Activated CD4-positive, alpha-beta T cell treated with anti-CD3 and anti-CD28 coated beads for 36 hours (primary cell): ENCODE measurements at regions of chr12 and their contacts with region 1.

Region 1: DNA sequence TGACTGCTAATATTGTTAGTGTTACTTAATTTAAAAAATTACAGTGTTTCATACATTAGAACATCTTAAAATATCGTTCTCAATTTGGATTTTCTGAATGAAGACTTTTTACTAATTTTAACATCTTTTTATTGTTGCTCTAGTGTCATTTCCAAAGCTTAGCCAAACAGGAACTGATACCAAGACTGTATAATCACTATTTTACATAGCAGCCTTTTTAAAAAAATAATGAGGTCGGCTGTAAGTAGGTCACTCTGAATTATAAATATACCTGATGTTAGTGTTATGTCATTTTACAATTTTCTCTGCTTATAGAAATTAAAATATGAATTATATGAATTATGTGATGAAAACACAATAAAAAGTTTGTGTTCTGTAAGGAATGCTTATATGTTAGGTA is 321.5 kb downstream of the TMEM117 start:
- DNase-seq: no peak
- ATAC-seq: no peak
- H3K4me3 Mint-ChIP-seq: no peak overlapping the region
- H3K27ac Mint-ChIP-seq: no peak overlapping the region
- H3K4me1 Mint-ChIP-seq: no peaks in the 10 kb centered on the region
- H3K27me3 Mint-ChIP-seq: no peaks in the 10 kb centered on the region

Region 2: DNA sequence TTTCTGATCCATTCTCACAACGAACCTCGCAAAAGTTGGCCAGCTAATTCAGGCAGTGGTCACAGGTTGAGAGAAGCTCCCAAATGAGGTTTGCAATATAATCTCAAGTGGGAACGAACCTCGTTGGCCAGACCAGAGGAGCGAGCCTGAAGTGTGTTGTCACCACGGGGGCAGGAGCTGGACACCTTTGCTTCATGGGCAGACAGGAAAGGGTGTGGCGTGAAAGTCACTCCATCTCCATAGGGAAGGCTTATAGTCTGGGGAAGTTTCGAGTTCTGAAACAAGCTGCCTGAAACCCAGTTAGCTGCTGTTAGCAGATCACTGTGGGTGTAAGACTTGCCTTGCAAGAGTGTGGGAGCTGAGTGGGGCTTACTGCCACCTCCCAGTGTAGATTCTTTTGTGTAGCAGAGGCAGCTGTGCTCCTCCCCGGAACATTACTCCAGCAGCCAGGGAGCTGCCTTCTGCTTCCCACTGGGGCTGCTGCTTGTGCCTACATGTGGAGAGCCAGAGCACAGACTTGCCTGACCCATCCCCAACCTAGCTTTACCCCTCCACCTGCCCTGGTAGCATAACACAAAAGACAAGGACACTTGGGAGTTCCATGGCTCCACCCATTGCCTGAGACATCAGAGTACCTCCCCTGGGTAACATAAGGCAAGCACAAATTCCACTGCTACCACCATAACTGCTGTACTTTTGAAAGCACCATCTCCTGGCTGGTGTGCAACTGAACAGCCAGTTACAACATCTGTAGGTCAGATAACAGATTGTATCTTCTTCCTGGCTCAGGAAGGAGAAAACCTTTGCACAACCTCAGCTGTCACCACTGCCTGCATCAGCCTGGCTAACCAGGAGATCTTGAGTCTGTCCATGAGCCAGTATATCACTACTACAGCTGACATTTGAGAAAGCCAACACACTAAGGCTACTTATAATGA is 675.0 kb before region 1 on chr12:
- CTCF ChIA-PET with region 1: no interaction called
- POLR2A ChIA-PET with region 1: no interaction called
- intact Hi-C with region 1: loop called in 1 of 2 experiments (anchors 10 kb)
- DNase-seq: no peak
- ATAC-seq: no peak
- H3K4me3 Mint-ChIP-seq: no peak overlapping the region
- H3K27ac Mint-ChIP-seq: no peak overlapping the region
- H3K4me1 Mint-ChIP-seq: no peaks in the 10 kb centered on the region
- H3K27me3 Mint-ChIP-seq: peaks cover 2% of the 10 kb centered on the region